T-cell (primary cell): ENCODE measurements at regions of chr21 and their contacts with region 1.

Region 1: DNA sequence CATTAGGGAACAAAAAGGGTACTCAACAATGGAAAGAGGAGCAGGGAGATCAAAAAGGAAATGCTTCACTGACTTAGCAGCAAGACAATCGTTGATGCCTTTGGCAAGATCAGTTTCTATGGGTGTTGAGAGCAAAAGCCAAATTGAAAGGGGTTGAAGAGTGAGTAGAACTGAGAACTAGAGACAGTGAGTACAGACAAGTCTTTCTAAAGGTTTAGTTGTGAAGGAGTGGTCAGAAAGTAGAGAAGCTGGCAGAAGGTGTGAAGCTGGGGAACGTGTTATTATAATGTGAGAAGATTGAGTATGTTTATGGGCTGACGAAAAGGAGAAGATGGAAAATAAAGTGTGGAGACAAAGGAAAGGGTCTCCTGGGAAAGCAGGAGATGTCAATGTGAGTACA is 221.2 kb upstream of the USP25 start:
- DNase-seq: peak in 1 of 35 experiments; percentile 18
- ATAC-seq: peak in 1 of 4 experiments; percentile 32
- H3K4me3 ChIP-seq: no peak overlapping the region
- H3K4me3 Mint-ChIP-seq: no peak overlapping the region
- H3K27ac ChIP-seq: peak overlapping the region; percentile 27
- H3K27ac Mint-ChIP-seq: no peak overlapping the region
- H3K4me1 ChIP-seq: peaks cover 0 to 14% of the 10 kb centered on the region in 2 experiments
- H3K4me1 Mint-ChIP-seq: peaks cover 3 to 8% (median 6%) of the 10 kb centered on the region in 3 donors
- H3K27me3 ChIP-seq: no peaks in the 10 kb centered on the region
- H3K27me3 Mint-ChIP-seq: no peaks in the 10 kb centered on the region

Region 2: DNA sequence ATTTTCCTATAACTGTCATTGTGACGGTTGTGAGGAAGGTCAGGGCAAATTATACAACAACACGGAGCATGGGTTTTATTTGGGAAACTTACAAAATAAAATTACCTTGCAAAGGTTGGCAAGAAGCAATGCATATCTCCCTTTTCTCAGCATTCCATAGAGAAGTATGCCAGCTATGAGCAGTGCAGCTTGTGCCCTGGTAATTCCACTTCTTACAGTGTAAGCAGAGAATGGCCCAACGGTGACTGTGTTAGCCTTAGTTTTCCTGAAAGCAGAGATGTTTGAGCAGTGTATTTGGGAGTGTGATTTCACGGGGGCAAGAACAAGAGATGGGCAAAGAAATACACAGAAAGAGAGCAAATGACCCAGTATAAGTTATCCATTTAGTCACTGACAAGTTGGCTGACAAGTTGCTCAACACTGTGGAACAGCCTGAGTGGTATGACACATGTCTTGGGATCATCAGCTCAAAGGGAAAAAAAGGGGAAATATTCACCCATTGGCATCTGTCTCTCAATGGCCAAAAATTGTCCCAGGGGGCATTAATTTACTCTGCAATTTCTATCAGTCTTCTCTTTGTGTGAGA is 232.8 kb before region 1 on chr21:
- CTCF ChIA-PET with region 1: no interaction called
- POLR2A ChIA-PET with region 1: no interaction called
- DNase-seq: no peak
- ATAC-seq: no peak
- H3K4me3 ChIP-seq: no peak overlapping the region
- H3K4me3 Mint-ChIP-seq: no peak overlapping the region
- H3K27ac ChIP-seq: no peak overlapping the region
- H3K27ac Mint-ChIP-seq: no peak overlapping the region
- H3K4me1 ChIP-seq: no peaks in the 10 kb centered on the region
- H3K4me1 Mint-ChIP-seq: no peaks in the 10 kb centered on the region
- H3K27me3 ChIP-seq: no peaks in the 10 kb centered on the region
- H3K27me3 Mint-ChIP-seq: no peaks in the 10 kb centered on the region

Region 3: GRCh38 chr21:15669247-15669646 is 160.7 kb after region 1 on chr21:
- CTCF ChIA-PET with region 1: no interaction called
- POLR2A ChIA-PET with region 1: no interaction called
- DNase-seq: no peak
- ATAC-seq: no peak
- H3K4me3 ChIP-seq: no peak overlapping the region
- H3K4me3 Mint-ChIP-seq: no peak overlapping the region
- H3K27ac ChIP-seq: no peak overlapping the region
- H3K27ac Mint-ChIP-seq: no peak overlapping the region
- H3K4me1 ChIP-seq: no peaks in the 10 kb centered on the region
- H3K4me1 Mint-ChIP-seq: no peaks in the 10 kb centered on the region
- H3K27me3 ChIP-seq: no peaks in the 10 kb centered on the region
- H3K27me3 Mint-ChIP-seq: no peaks in the 10 kb centered on the region

Region 4: DNA sequence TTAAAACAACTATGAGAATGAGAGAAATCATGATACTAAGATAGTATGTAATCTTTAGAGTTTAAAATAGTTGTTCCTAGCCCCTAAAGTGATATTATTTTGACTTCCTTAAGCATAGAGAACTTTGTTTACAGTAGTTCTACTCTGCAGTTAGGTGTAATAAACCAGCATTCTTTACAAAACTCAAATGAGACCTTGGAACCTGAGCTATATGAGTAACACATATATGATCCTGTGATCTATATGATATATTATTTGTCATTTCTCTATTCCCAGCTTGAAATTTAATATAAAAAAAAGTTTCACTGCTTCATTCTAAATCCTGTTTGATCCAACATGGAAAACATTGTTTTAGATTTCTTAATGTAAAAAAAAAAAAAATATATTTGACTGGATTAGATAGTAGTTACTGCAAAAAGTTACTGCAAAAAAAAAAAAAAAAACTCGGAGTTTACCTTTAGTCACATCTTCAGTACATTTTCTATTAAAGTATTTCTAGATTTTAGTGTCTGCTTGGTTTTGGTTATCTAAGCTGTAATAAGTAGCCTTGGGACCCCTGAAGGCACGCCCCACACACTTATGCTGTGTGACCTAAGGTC is 685.0 kb after region 1 on chr21:
- CTCF ChIA-PET with region 1: no interaction called
- POLR2A ChIA-PET with region 1: interaction called in 1 of 2 experiments, 13 read pairs
- DNase-seq: no peak
- ATAC-seq: no peak
- H3K4me3 ChIP-seq: no peak overlapping the region
- H3K4me3 Mint-ChIP-seq: no peak overlapping the region
- H3K27ac ChIP-seq: no peak overlapping the region
- H3K27ac Mint-ChIP-seq: no peak overlapping the region
- H3K4me1 ChIP-seq: peaks cover 0 to 18% of the 10 kb centered on the region in 2 experiments
- H3K4me1 Mint-ChIP-seq: peaks cover 2 to 31% (median 21%) of the 10 kb centered on the region in 3 donors
- H3K27me3 ChIP-seq: no peaks in the 10 kb centered on the region
- H3K27me3 Mint-ChIP-seq: no peaks in the 10 kb centered on the region